Natural killer cell (primary cell): ENCODE measurements at regions of chr12 and their contacts with region 1.

Region 1: DNA sequence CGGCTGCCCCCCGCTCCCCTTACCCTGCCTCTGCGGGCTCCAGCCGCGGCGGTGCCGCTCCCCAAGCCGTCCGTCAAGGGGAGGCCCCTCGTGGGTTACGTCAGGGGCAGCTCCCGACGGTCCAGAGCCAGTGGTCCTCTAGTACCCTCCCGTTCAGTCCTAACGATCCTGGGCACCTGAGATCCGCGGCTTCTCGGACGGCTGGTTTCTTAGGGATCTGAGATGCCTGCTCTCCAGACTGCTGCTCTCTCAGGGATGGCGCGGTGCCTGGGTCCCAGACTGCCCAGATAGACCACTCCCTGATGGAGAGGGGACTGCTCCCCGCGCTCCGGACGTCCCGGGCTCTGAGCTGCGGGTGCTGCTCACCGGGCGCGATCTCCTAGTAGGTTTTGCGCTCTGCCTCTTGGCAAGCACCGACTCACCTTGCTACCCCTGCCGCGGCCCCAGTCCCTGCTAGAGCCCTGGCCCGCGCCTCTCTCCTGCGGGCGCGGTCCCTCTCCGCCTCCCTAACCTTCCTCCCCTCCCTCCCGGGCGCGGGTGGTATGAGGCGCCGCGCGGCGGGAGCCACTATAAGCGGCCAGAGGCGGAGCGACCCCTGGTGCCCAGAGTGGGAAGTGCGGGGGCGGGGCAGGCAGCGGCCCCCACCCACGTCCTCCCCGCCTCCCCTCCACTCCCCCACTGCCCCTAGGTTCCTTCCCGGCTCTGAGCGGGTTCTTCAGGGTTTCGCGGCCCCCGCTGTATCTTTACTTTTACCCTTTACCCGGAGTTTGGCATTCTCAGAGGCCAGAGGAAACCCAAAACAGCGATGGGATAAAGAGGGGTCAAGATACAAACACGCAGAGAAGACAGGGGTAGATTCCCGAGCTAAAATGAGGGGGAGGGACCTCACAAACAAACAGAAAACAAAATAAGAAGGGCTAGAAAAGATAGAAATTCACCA is at the start of gene C1QL4:
- DNase-seq: peak; percentile 90 to 91
- ATAC-seq: peak; percentile 96 to 99 (median 98)
- H3K4me3 ChIP-seq: peak within 1 kb of the TSS; percentile 0
- H3K4me3 Mint-ChIP-seq: peak within 1 kb of the TSS; percentile 67
- H3K27ac ChIP-seq: no peak within 1 kb of the TSS
- H3K27ac Mint-ChIP-seq: peak within 1 kb of the TSS in 1 of 2 donors; percentile 2
- H3K4me1 ChIP-seq: peaks cover 29% of the 10 kb centered on the region
- H3K4me1 Mint-ChIP-seq: peaks cover 10 to 26% of the 10 kb centered on the region in 2 donors
- H3K27me3 ChIP-seq: peaks cover 39% of the 10 kb centered on the region
- H3K27me3 Mint-ChIP-seq: peaks cover 68 to 72% of the 10 kb centered on the region in 2 donors
- CTCF ChIP-seq: peak; percentile 98
- total RNA-seq, gene C1QL4: not detected

Region 2: DNA sequence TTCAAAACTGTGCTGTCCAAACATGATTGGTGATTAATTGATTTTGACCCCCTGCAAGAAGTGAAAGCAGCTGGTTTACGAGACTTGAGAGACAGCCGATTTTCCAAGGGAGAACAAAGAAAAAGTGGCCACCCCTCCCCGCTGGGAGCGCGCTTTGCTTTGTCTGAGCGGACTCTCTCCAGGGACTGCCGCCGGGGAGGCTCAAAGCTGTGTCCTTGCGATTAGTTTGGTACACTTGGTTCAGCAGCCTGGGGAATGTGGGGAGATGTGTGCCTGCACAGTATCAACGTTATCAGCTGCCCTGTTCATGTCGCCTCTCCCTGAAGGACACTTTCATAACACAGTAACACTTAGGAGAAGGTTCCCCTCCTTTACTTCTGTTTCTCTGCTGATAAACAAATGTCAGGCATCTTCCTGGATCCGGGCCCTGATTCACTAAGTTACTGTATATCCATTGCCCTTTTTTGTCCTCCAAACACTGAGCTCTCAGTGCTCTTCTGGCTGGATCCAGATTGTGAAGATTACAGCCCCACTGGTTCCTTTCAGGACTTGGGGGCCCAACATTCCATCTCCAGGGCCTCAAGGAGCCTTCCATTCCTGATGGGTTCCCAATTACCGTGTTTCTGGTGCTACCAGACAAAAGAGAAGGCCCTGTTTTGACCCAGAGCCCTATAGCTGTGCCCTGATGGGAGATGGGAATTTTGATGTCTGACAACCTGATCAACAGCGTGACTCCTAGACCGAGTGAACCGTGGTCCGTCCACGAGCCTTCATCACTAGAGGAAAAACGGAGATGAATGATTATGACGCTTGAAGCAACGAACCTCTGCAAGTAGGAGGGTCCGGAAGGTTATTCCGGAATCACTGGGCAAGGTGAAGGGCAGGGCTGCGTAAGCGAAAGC is 103.7 kb before region 1 on chr12:
- intact Hi-C with region 1: no loop called
- DNase-seq: no peak
- ATAC-seq: no peak
- H3K4me3 ChIP-seq: no peak overlapping the region
- H3K4me3 Mint-ChIP-seq: peak overlapping the region; percentile 68
- H3K27ac ChIP-seq: peak overlapping the region; percentile 75
- H3K27ac Mint-ChIP-seq: peak overlapping the region in 1 of 2 donors; percentile 84
- H3K4me1 ChIP-seq: peaks cover 19% of the 10 kb centered on the region
- H3K4me1 Mint-ChIP-seq: peaks cover 0 to 13% of the 10 kb centered on the region in 2 donors
- H3K27me3 ChIP-seq: no peaks in the 10 kb centered on the region
- H3K27me3 Mint-ChIP-seq: no peaks in the 10 kb centered on the region
- CTCF ChIP-seq: no peak

Region 3: GRCh38 chr12:49322708-49323523 is 14.0 kb before region 1 on chr12 and contains the start of gene TROAP:
- intact Hi-C with region 1: loop called (anchors 2 kb)
- DNase-seq: peak; percentile 94 to 98
- ATAC-seq: peak; percentile 96 to 99 (median 97)
- H3K4me3 ChIP-seq: peak within 1 kb of the TSS; percentile 67
- H3K4me3 Mint-ChIP-seq: peak within 1 kb of the TSS; percentile 89
- H3K27ac ChIP-seq: peak within 1 kb of the TSS; percentile 46
- H3K27ac Mint-ChIP-seq: peak within 1 kb of the TSS; percentile 77 to 86
- H3K4me1 ChIP-seq: peaks cover 16% of the 10 kb centered on the region
- H3K4me1 Mint-ChIP-seq: peaks cover 11 to 18% of the 10 kb centered on the region in 2 donors
- H3K27me3 ChIP-seq: no peaks in the 10 kb centered on the region
- H3K27me3 Mint-ChIP-seq: peaks cover 0 to 5% of the 10 kb centered on the region in 2 donors
- CTCF ChIP-seq: no peak
- total RNA-seq, gene TROAP: 0.58 to 3.0 (median 2.2) TPM